ENCODE measurements at regions of chr6 and their contacts with region 1.

Region 1: GRCh38 chr6:124795643-124796463 is 166.4 kb upstream of the RNF217 start:
- DNase-seq: peak in 1 of 2 donors; percentile 56
- ATAC-seq: peak; percentile 68 to 91 (median 72)
- H3K4me3 ChIP-seq: no peak overlapping the region
- H3K27ac ChIP-seq: no peak overlapping the region
- H3K4me1 ChIP-seq: no peaks in the 10 kb centered on the region
- H3K27me3 ChIP-seq: no peaks in the 10 kb centered on the region
- CTCF ChIP-seq: peak; percentile 53

Region 2: GRCh38 chr6:123777563-123777962 is 1018.3 kb before region 1 on chr6:
- intact Hi-C with region 1: loop called in 1 of 2 experiments (anchors 10 kb)
- DNase-seq: no peak
- ATAC-seq: peak in 1 of 4 donors; percentile 45
- H3K4me3 ChIP-seq: no peak overlapping the region
- H3K27ac ChIP-seq: no peak overlapping the region
- H3K4me1 ChIP-seq: no peaks in the 10 kb centered on the region
- H3K27me3 ChIP-seq: no peaks in the 10 kb centered on the region
- CTCF ChIP-seq: peak; percentile 33

Region 3: GRCh38 chr6:124714728-124715127 is 81.1 kb before region 1 on chr6:
- intact Hi-C with region 1: no loop called
- DNase-seq: no peak
- ATAC-seq: no peak
- H3K4me3 ChIP-seq: no peak overlapping the region
- H3K27ac ChIP-seq: no peak overlapping the region
- H3K4me1 ChIP-seq: no peaks in the 10 kb centered on the region
- H3K27me3 ChIP-seq: no peaks in the 10 kb centered on the region
- CTCF ChIP-seq: no peak